ENCODE measurements at regions of chr6 and their contacts with region 1.

Region 1: GRCh38 chr6:5315881-5316280 is 54.6 kb downstream of the FARS2 start:
- DNase-seq: no peak
- ATAC-seq: no peak
- H3K4me3 Mint-ChIP-seq: no peak overlapping the region
- H3K27ac Mint-ChIP-seq: no peak overlapping the region
- H3K4me1 Mint-ChIP-seq: peaks cover 49% of the 10 kb centered on the region
- H3K27me3 Mint-ChIP-seq: no peaks in the 10 kb centered on the region
- CTCF ChIP-seq: no peak

Region 2: GRCh38 chr6:3414327-3415075 is 1901.4 kb before region 1 on chr6:
- CTCF ChIA-PET with region 1: no interaction called
- POLR2A ChIA-PET with region 1: interaction called, 15 read pairs
- intact Hi-C with region 1: no loop called
- DNase-seq: no peak
- ATAC-seq: no peak
- H3K4me3 Mint-ChIP-seq: no peak overlapping the region
- H3K27ac Mint-ChIP-seq: no peak overlapping the region
- H3K4me1 Mint-ChIP-seq: peaks cover 6% of the 10 kb centered on the region
- H3K27me3 Mint-ChIP-seq: peaks cover 8% of the 10 kb centered on the region
- CTCF ChIP-seq: no peak

Region 3: GRCh38 chr6:5174244-5174643 is 141.6 kb before region 1 on chr6:
- CTCF ChIA-PET with region 1: no interaction called
- POLR2A ChIA-PET with region 1: no interaction called
- intact Hi-C with region 1: no loop called
- DNase-seq: no peak
- ATAC-seq: peak; percentile 82
- H3K4me3 Mint-ChIP-seq: peak overlapping the region; percentile 75
- H3K27ac Mint-ChIP-seq: peak overlapping the region; percentile 79
- H3K4me1 Mint-ChIP-seq: peaks cover 30% of the 10 kb centered on the region
- H3K27me3 Mint-ChIP-seq: no peaks in the 10 kb centered on the region
- CTCF ChIP-seq: no peak

Region 4: DNA sequence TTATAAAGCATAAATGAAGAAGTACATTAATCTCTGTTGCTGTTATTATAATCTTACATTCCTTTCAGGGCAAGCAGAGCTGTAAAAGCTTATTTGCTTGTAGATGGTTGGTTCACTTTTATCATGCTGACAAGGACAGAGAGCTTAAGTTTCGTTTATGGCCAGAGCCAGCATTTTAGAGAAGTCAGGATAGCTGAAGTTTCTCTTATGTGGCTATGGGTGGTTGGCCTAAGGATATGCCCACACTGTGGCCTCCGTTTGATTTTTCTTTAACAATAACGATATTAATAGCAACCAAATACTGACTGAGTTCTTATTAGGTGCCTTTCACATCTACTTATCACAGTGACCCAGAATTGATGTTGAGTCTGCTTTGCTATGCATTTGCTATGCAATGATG is 23.9 kb after region 1 on chr6:
- CTCF ChIA-PET with region 1: no interaction called
- POLR2A ChIA-PET with region 1: interaction called, 13 read pairs
- intact Hi-C with region 1: no loop called
- DNase-seq: no peak
- ATAC-seq: no peak
- H3K4me3 Mint-ChIP-seq: no peak overlapping the region
- H3K27ac Mint-ChIP-seq: no peak overlapping the region
- H3K4me1 Mint-ChIP-seq: peaks cover 41% of the 10 kb centered on the region
- H3K27me3 Mint-ChIP-seq: no peaks in the 10 kb centered on the region
- CTCF ChIP-seq: no peak

Region 5: DNA sequence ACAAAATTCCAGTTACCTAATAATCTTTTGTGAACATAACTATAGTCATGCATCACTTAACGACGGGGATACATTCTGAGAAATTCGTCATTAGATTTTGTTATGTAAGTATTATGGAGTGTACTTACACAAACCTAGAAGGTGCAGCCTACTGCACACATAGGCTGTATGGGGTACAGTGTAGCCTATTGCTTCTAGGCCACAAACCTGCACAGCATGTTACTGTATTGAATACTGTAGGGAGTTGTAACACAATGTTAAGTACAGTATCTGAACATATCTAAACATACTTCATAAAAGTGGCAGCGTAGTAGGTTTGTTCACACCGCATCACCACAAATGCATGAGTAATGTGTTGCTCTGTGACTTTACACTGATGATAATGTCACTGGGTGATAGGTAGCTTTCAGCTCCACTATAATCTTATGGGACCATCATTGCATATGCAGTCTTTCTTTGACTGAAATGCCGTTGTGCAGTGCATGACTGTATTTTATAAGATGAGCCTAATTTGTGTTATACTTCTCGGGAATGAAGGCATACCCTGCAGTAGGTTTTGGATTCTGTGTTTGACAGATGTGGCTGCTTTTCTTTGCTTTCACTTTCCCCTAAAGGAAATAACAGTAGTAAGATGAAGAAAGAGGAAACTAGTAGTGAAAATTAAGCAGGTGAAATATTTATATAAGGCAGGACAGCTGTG is 311.0 kb after region 1 on chr6:
- CTCF ChIA-PET with region 1: no interaction called
- POLR2A ChIA-PET with region 1: no interaction called
- intact Hi-C with region 1: no loop called
- DNase-seq: no peak
- ATAC-seq: peak; percentile 47
- H3K4me3 Mint-ChIP-seq: peak overlapping the region; percentile 58
- H3K27ac Mint-ChIP-seq: peak overlapping the region; percentile 61
- H3K4me1 Mint-ChIP-seq: peaks cover 40% of the 10 kb centered on the region
- H3K27me3 Mint-ChIP-seq: no peaks in the 10 kb centered on the region
- CTCF ChIP-seq: no peak